ENCODE measurements at regions of chr10 and their contacts with region 1.

Region 1: GRCh38 chr10:127715782-127716378 is 21.1 kb upstream of the FOXI2 start:
- DNase-seq: no peak
- ATAC-seq: no peak
- H3K4me3 ChIP-seq: no peak overlapping the region
- H3K27ac ChIP-seq: no peak overlapping the region
- H3K4me1 ChIP-seq: no peaks in the 10 kb centered on the region
- H3K27me3 ChIP-seq: no peaks in the 10 kb centered on the region
- CTCF ChIP-seq: peak; percentile 29

Region 2: DNA sequence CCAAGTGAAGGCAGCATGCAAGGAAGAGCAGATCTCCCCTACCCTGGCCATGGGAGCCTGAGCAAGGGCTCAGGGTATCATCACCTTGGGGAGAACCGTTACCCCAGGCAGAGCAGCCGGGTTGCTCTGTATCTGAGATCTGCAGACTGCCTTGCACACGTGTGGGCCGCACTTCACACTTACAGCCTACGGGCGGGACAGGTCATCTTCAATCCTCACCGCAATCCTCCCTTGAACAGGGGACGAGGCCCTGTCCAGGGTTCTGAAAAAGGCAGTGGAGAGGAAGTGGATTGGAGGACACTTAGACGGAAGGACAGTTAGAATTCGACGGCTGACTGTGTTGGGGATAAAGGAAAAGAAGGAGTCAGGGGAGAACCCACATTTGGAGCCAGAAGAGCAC is 115.4 kb before region 1 on chr10:
- intact Hi-C with region 1: no loop called
- DNase-seq: no peak
- ATAC-seq: no peak
- H3K4me3 ChIP-seq: no peak overlapping the region
- H3K27ac ChIP-seq: no peak overlapping the region
- H3K4me1 ChIP-seq: no peaks in the 10 kb centered on the region
- H3K27me3 ChIP-seq: no peaks in the 10 kb centered on the region
- CTCF ChIP-seq: no peak

Region 3: GRCh38 chr10:127853868-127854768 is 138.2 kb after region 1 on chr10:
- intact Hi-C with region 1: loop called (anchors 2 to 10 kb)
- DNase-seq: peak; percentile 49 to 71
- ATAC-seq: peak; percentile 64 to 86 (median 81)
- H3K4me3 ChIP-seq: no peak overlapping the region
- H3K27ac ChIP-seq: no peak overlapping the region
- H3K4me1 ChIP-seq: no peaks in the 10 kb centered on the region
- H3K27me3 ChIP-seq: peaks cover 0 to 5% (median 4%) of the 10 kb centered on the region in 3 donors
- CTCF ChIP-seq: peak; percentile 65

Region 4: GRCh38 chr10:128069351-128070051 is 353.6 kb after region 1 on chr10:
- intact Hi-C with region 1: loop called in 1 of 2 experiments (anchors 5 kb)
- DNase-seq: peak; percentile 64 to 86
- ATAC-seq: peak; percentile 60 to 71 (median 66)
- H3K4me3 ChIP-seq: no peak overlapping the region
- H3K27ac ChIP-seq: no peak overlapping the region
- H3K4me1 ChIP-seq: peaks cover 6% of the 10 kb centered on the region
- H3K27me3 ChIP-seq: no peaks in the 10 kb centered on the region
- CTCF ChIP-seq: peak; percentile 78